ENCODE measurements at regions of chr11 and their contacts with region 1.

Region 1: GRCh38 chr11:36372101-36372767 is 76.1 kb downstream of the PRR5L start:
- DNase-seq: no peak
- H3K4me3 Mint-ChIP-seq: no peak overlapping the region
- H3K27ac Mint-ChIP-seq: no peak overlapping the region
- H3K4me1 Mint-ChIP-seq: peaks cover 26% of the 10 kb centered on the region
- H3K27me3 Mint-ChIP-seq: peaks cover 48% of the 10 kb centered on the region
- CTCF ChIP-seq: no peak

Region 2: DNA sequence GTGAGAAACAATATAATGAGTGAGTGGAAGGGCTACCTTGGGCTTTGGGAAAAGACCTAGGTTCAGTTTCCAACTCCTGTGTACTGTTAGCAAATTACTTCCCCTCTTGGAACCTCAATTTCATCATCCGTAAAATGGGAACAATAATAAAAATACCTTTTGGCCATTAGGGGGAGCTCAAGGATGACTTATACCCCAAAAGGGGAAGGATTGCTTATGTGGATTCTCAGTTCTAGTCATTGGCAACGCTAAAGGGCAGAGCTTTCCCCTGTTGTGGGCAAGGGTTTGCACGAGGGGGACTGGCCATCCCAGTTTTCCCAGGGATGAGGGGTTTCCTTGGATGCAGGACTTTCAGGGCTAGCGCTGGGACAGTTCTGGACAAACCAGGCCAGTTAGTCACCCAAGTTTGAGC is 79.9 kb before region 1 on chr11:
- CTCF ChIA-PET with region 1: no interaction called
- intact Hi-C with region 1: loop called (anchors 5 kb)
- DNase-seq: peak; percentile 21
- H3K4me3 Mint-ChIP-seq: no peak overlapping the region
- H3K27ac Mint-ChIP-seq: no peak overlapping the region
- H3K4me1 Mint-ChIP-seq: peaks cover 20% of the 10 kb centered on the region
- H3K27me3 Mint-ChIP-seq: peaks cover 18% of the 10 kb centered on the region
- CTCF ChIP-seq: no peak

Region 3: DNA sequence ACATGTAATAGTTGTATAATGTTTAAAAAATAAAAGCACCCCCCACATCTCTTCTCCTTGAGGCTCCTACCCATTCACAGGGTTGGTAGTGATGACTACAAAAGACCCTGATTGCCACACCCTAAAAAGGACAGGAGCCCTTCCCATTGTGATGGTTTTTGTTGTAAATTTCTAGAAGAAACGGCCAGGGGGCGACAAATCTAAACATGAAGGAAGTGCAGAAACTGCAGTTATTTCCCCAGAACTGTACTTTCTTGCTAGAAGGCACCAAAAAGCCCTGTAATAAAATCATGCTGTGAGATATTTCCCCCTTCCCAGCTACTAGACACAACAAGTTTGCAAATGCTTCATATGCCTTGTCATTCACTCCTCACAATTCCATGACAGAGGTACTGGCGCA is 65.3 kb before region 1 on chr11:
- CTCF ChIA-PET with region 1: no interaction called
- intact Hi-C with region 1: loop called (anchors 5 kb)
- DNase-seq: no peak
- H3K4me3 Mint-ChIP-seq: no peak overlapping the region
- H3K27ac Mint-ChIP-seq: no peak overlapping the region
- H3K4me1 Mint-ChIP-seq: peaks cover 23% of the 10 kb centered on the region
- H3K27me3 Mint-ChIP-seq: peaks cover 8% of the 10 kb centered on the region
- CTCF ChIP-seq: no peak